ENCODE measurements at regions of chr2 and their contacts with region 1.

Region 1: GRCh38 chr2:231297108-231297908 is 98.2 kb upstream of the B3GNT7 start:
- DNase-seq: no peak
- H3K4me3 ChIP-seq: no peak overlapping the region
- H3K27me3 ChIP-seq: no peaks in the 10 kb centered on the region
- CTCF ChIP-seq: peak; percentile 76

Region 2: DNA sequence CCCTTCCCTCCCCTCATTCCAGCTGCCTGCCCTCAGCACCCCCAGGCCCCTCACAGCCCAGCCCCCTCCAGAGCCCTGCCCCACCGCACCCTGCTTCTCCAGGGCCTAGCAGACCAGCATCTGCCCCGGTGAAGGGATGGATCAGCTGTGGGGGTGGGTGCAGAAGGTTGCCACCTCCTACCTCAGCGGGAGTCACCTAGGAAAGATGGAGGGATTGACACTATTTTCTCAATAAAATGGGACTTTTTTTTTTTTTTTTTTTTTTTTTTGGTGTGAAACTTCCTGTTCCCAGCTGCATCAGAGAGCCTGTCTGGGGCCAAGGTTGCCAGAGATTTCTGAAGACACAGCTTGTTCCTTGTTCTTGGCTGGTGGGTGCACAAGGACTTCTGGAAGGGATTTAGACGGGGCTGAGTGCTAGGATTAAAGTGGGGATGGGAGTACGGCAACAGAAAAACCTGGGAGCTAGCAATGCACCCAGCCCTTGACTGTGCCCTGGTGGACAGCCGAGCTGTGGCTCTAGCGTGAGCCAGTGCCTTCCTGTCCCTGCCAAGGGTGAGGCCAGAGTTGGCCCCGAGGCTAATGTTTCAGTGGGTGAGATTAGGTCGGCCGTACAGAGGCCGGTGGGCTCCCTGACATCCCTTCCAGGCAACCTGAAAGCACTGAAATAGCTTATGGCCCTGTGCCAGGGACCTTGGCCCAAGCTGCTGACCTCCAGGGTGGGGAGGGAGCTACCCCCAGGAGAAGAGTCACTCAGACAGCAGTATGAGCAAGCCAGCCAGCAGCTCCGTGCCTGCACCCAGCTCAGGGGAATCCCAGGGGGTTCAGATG is 102.8 kb after region 1 on chr2:
- CTCF ChIA-PET with region 1: interaction called, 23 read pairs
- POLR2A ChIA-PET with region 1: no interaction called
- DNase-seq: no peak
- H3K4me3 ChIP-seq: no peak overlapping the region
- H3K27me3 ChIP-seq: peaks cover 6% of the 10 kb centered on the region
- CTCF ChIP-seq: no peak

Region 3: DNA sequence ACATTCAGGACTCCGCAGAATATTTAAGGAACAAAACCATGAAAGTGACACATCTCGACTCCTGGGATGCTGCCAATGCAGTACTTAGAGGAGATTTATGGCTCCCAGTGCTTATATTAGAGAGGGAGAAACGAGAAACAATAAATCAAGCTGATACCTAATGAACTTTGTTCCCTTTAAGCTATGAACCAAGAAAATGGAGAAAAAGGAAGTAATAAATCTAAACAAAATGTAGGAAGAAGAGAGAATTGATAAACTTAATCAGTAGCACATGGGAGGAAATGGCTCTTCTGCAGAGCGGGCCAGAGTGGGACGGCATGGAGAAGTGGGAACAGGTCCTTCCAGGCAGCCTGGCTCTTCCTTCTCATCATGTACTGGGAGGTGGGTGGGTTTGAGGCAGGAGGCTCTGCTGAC is 586.2 kb after region 1 on chr2:
- CTCF ChIA-PET with region 1: no interaction called
- POLR2A ChIA-PET with region 1: no interaction called
- DNase-seq: no peak
- H3K4me3 ChIP-seq: no peak overlapping the region
- H3K27me3 ChIP-seq: peaks cover 20% of the 10 kb centered on the region
- CTCF ChIP-seq: no peak

Measured in BJ (cell line).